MCF 10A (cell line): ENCODE measurements at regions of chr19 and their contacts with region 1.

Region 1: DNA sequence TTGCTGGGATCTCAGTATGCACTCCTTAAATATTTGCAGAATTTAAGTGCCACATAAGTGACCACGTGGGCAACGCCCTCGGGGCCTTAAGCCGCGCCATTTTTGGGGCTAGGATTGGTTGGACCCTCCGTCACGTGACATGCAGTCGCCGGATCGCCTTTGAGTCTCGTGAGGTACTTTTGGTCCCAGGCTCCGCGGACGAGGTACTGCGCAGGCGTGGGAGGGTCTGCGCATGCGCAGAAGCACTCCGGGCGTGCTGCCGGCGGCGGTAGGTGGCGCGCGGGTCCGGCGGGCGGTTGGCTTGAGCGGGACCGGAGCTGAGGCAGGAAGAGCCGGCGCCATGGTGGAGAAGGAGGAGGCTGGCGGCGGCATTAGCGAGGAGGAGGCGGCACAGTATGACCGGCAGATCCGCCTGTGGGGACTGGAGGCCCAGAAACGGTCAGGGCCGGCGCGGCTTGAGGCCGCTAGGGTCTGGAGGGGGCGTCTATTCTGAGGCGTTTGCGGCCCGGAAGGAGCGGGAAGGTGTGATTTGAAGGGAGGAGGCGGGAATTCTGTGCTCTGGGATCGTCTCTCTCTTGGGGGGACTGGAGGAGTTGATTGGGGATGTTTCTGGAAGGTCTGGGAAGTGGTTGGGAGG is at the start of gene SAE1:
- DNase-seq: peak; percentile 98
- H3K4me3 Mint-ChIP-seq: peak within 1 kb of the TSS; percentile 99
- H3K27ac Mint-ChIP-seq: peak within 1 kb of the TSS; percentile 92
- H3K4me1 Mint-ChIP-seq: peaks cover 35% of the 10 kb centered on the region
- H3K27me3 Mint-ChIP-seq: no peaks in the 10 kb centered on the region
- CTCF ChIP-seq: peak; percentile 23
- total RNA-seq, gene SAE1: 76.1 and 81.7 TPM in 2 replicates

Region 2: DNA sequence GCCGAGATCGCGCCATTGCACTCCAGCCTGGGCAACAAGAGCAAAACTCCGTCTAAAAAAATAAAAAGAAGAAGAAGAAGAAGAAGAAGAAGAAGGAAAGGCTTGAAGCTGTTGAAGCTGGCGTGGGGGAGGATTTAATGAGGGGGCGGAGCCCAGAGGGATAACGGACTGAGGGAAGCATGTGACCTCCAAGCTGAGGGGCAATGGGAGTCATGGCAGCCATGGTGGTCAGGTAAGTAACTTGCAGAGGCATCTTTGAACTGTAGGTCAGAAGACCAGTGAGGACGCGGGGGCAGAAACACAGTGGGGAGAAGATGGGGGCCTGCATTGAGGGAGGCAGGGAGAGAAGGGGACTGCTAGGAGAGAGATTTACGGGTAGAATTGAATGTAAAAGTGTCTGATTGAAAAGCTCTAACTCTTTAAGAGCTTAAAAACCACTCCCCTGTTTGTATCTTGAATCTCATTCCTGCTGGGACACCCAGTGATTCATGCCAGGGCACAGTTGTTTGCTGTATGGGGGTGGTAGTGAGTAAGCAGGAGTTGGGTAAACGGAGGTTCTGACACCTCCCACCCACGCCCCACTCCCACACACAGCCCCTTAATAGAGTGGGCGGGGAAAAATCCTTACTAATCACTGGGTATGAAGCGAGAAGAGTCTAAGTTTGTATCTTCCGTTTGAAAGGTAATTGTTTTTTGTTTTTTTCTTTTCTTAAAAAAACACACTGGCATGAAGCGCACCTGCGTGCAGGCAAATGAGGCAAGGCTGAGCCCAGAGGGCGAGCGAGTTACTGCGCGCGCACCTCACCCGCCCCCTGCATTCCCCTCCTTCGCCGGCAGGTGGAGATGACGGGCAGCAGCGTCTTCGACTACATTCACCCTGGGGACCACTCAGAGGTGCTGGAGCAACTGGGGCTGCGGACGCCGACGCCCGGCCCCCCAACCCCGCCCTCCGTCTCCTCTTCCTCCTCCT is 95.3 kb before region 1 on chr19:
- CTCF ChIA-PET with region 1: interaction called, 34 read pairs
- POLR2A ChIA-PET with region 1: interaction called, 11 read pairs
- intact Hi-C with region 1: loop called (anchors 1 kb)
- DNase-seq: peak; percentile 95
- H3K4me3 Mint-ChIP-seq: peak overlapping the region; percentile 74
- H3K27ac Mint-ChIP-seq: peak overlapping the region; percentile 94
- H3K4me1 Mint-ChIP-seq: peaks cover 8% of the 10 kb centered on the region
- H3K27me3 Mint-ChIP-seq: no peaks in the 10 kb centered on the region
- CTCF ChIP-seq: peak; percentile 91

Region 3: GRCh38 chr19:47143322-47144073 is 12.8 kb after region 1 on chr19:
- CTCF ChIA-PET with region 1: interaction called, 15 read pairs
- POLR2A ChIA-PET with region 1: interaction called, 10 read pairs
- intact Hi-C with region 1: no loop called
- DNase-seq: no peak
- H3K4me3 Mint-ChIP-seq: no peak overlapping the region
- H3K27ac Mint-ChIP-seq: peak overlapping the region; percentile 12
- H3K4me1 Mint-ChIP-seq: peaks cover 16% of the 10 kb centered on the region
- H3K27me3 Mint-ChIP-seq: no peaks in the 10 kb centered on the region
- CTCF ChIP-seq: no peak

Region 4: GRCh38 chr19:47152224-47153017 is 21.7 kb after region 1 on chr19:
- CTCF ChIA-PET with region 1: interaction called, 15 read pairs
- POLR2A ChIA-PET with region 1: interaction called, 6 read pairs
- intact Hi-C with region 1: no loop called
- DNase-seq: no peak
- H3K4me3 Mint-ChIP-seq: peak overlapping the region; percentile 13
- H3K27ac Mint-ChIP-seq: peak overlapping the region; percentile 79
- H3K4me1 Mint-ChIP-seq: peaks cover 13% of the 10 kb centered on the region
- H3K27me3 Mint-ChIP-seq: no peaks in the 10 kb centered on the region
- CTCF ChIP-seq: no peak